HCT116 (cell line): ENCODE measurements at regions of chr4 and their contacts with region 1.

Region 1: DNA sequence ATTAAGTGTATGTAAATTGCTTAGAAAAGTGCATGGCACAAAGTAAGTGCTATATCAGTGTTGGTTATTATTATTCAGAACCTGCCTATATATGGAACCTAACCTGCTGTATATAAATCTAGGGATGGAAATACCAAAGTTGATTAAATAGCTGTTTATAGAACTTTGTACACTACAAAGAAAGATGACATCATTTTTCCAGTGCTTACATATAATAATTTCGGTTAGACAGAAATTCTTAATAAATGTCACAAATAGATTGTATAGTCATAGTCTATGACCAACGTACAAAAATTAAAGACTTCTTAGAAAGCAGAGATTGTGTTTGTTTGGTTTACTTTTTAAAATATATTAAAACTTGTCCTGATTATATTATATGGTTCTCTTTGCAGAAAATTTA is 4.4 kb downstream of the GYPB start:
- DNase-seq: no peak
- ATAC-seq: no peak
- H3K4me3 ChIP-seq: no peak overlapping the region
- H3K27ac ChIP-seq: no peak overlapping the region
- H3K4me1 ChIP-seq: no peaks in the 10 kb centered on the region
- H3K27me3 ChIP-seq: no peaks in the 10 kb centered on the region
- CTCF ChIP-seq: no peak
- POLR2A ChIP-seq: no peak
- RAD21 ChIP-seq: no peak

Region 2: DNA sequence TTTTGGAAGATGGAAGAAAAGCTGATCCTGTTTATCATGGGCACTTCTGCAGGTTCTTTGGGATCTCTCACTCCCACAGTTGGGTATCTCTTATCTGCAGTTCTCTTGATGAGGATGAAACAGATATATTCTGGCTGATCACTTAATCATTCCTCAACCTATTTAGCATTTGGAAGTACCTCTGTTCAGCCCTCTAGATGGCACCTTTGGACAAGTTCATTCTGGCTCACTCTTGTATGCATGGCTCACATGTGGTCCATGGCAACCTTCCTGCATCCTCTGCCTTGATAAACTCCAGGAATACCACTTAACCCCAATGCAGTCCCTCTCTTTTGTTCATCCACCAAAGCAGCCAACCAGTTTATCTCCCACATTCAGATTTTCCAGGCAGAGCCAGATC is 427.1 kb before region 1 on chr4:
- CTCF ChIA-PET with region 1: no interaction called
- POLR2A ChIA-PET with region 1: no interaction called
- RAD21 ChIA-PET with region 1: no interaction called
- intact Hi-C with region 1: loop called (anchors 10 kb)
- DNase-seq: peak; percentile 18
- ATAC-seq: peak; percentile 79
- H3K4me3 ChIP-seq: no peak overlapping the region
- H3K27ac ChIP-seq: no peak overlapping the region
- H3K4me1 ChIP-seq: no peaks in the 10 kb centered on the region
- H3K27me3 ChIP-seq: no peaks in the 10 kb centered on the region
- CTCF ChIP-seq: peak in 2 of 3 experiments; percentile 27 to 28; a peak in 3 of 6 replicates
- POLR2A ChIP-seq: no peak
- RAD21 ChIP-seq: peak; percentile 55